Activated CD8-positive, alpha-beta T cell treated with anti-CD3 and anti-CD28 coated beads, Interleukin-2, amount 10 ng/mL, durations not matched to agents 7 days and 5 days (primary cell): ENCODE measurements at regions of chr2 and their contacts with region 1.

Region 1: DNA sequence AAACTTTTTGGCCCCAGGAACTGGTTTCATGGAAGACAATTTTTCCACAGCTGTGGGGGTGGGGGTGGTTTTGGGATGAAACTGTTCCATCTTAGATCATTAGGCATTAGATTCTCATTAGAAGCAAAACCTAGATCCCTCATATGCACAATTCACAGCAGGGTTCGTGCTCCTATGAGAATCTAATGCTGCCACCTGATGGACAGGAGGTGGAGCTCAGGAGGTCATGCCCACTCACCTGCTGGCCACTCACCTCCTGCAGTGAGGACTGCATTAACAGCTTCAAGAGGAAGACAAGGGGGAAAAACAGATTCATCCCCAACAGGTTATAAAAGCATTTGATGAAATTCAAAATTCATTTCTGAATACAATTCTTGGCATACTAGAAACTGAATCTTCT is 38.5 kb downstream of the THAP4 start:
- DNase-seq: no peak
- ATAC-seq: no peak
- H3K4me3 Mint-ChIP-seq: no peak overlapping the region
- H3K27ac Mint-ChIP-seq: no peak overlapping the region
- H3K4me1 Mint-ChIP-seq: no peaks in the 10 kb centered on the region
- H3K27me3 Mint-ChIP-seq: no peaks in the 10 kb centered on the region

Region 2: DNA sequence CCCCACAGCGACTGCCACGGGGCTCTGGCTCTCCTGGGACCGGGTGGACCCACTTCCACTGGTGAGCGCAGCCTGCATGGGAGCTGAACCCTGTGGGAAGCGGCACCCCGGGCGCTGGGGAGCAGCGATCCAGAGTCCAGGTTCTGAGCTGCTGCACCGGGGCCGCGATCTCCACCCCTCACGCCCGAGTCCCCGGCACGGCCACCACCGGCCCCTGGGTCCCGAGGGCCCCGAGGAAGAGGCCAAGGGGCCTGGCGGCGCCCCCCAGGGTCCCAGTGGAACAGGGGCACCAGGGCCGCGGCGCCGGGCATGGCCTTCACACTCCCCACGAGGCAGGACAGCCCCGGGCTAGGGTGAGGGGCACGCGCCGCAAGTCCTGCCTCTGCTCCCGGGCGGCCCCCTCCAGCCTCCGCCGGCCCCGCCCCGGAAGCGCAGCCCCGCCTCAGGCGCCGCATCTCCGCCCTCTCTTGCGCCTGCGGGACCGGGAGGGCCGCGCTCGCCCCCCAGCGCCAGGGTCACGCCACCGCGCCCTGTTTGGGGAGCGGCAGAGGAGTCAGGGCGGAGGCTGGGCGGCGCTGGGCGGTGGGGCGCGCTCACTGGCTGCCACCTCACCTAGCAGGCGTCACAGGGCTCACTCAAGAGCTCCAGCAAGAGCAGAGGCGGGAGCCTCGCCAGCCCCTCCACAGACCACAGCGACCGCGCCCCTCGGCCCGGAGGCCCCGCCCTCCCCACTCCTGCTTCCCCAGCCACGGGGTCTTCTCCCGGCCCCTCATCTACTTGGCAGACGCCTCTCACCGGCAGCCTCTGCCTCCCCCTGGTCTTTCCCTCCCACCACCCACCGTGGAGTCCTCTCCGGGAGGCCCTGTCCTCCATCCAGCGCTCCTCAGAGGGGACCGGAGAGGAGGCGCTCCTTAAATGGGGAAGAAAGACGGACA is 11.6 kb after region 1 on chr2:
- CTCF ChIA-PET with region 1: interaction called, 17 read pairs
- POLR2A ChIA-PET with region 1: no interaction called
- DNase-seq: peak; percentile 95
- ATAC-seq: peak; percentile 99
- H3K4me3 Mint-ChIP-seq: peak overlapping the region; percentile 63
- H3K27ac Mint-ChIP-seq: peak overlapping the region; percentile 76
- H3K4me1 Mint-ChIP-seq: peaks cover 24% of the 10 kb centered on the region
- H3K27me3 Mint-ChIP-seq: no peaks in the 10 kb centered on the region